Activated CD4-positive, alpha-beta T cell treated with anti-CD3 and anti-CD28 coated beads, Interleukin-2, amount 10 ng/mL, durations not matched to agents 24 days and 14 days (primary cell): ENCODE measurements at regions of chr9 and their contacts with region 1.

Region 1: GRCh38 chr9:111916234-111916645 is 19.6 kb downstream of the UGCG start:
- DNase-seq: peak; percentile 74
- H3K4me3 Mint-ChIP-seq: peak overlapping the region; percentile 3
- H3K27ac Mint-ChIP-seq: peak overlapping the region; percentile 89
- H3K4me1 Mint-ChIP-seq: peaks cover 38% of the 10 kb centered on the region
- H3K27me3 Mint-ChIP-seq: no peaks in the 10 kb centered on the region

Region 2: GRCh38 chr9:111937781-111938426 is 21.7 kb after region 1 on chr9:
- intact Hi-C with region 1: loop called (anchors 1 kb)
- DNase-seq: peak; percentile 84
- H3K4me3 Mint-ChIP-seq: peak overlapping the region; percentile 45
- H3K27ac Mint-ChIP-seq: peak overlapping the region; percentile 83
- H3K4me1 Mint-ChIP-seq: peaks cover 22% of the 10 kb centered on the region
- H3K27me3 Mint-ChIP-seq: peaks cover 2% of the 10 kb centered on the region

Region 3: DNA sequence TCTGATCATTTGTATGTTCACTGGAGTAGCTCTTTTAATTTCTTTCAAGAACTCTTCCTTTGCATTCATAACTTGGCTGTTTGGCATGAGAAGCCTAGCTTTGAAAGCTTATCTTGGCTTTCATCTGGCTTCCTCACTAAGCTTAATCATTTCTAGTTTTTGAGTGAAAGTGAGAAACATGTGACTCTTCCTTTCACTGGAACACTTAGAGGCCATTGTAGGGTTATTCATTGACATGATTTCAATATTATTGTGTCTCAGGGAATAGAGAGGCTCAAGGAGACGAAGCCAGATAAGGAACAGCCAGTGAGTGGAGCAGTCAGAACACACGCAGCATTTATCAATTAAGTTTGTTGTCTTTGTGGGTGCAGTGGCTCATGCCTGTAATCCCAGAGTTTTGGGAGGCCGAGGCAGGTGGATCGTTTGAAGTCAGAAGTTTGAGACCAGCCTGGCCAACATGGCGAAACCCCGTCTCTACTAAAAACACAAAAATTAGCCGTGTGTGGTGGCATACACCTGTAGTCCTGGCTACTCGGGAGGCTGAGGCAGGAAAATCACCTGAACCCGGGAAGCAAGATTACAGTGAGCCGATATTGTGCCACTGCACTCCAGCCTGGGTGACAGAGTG is 78.7 kb after region 1 on chr9:
- intact Hi-C with region 1: loop called (anchors 1 kb)
- DNase-seq: no peak
- H3K4me3 Mint-ChIP-seq: peak overlapping the region; percentile 34
- H3K27ac Mint-ChIP-seq: peak overlapping the region; percentile 76
- H3K4me1 Mint-ChIP-seq: peaks cover 23% of the 10 kb centered on the region
- H3K27me3 Mint-ChIP-seq: peaks cover 17% of the 10 kb centered on the region

Region 4: DNA sequence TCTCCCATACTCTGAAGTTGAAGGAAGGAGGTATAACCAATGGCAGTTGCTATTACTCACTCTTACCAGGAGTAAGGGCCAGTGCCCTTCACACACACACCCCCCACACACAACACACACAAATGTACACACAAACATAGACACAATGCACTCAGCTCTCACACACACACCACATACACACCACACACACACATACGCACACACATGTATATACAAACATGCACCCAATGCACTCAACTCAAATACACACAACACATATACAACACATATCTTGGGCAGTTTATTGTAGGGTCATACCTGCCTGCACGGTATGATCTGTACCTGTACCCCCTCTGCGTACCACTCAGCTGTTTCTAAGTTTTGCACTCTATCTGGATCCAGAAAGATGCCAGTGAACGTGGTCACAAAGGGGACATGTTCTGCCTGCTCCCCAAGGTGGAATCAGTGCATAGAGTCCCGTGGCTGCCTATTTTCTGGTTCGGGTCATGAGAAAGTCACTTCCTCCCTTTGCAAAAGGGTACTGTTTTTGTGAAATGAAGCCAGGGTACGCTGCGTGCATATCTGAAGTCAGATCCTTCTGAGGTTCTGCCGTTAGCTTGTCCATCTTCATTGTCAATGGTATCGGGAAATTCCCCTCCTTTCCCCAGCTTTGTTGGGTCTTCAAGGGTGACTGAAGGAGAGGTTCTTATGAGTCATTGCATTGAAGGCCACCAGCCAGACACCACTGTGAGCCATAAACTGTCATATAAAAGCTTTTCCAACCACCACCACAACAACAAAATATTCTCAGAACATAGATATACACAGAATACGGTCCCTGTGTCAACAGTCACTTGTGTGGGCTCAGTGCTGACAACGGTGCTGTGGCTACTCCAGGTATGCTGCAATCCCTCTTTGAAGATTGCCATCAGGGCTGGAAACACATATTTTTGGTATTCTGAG is 112.3 kb after region 1 on chr9:
- intact Hi-C with region 1: loop called (anchors 1 kb)
- DNase-seq: peak; percentile 68
- H3K4me3 Mint-ChIP-seq: no peak overlapping the region
- H3K27ac Mint-ChIP-seq: peak overlapping the region; percentile 36
- H3K4me1 Mint-ChIP-seq: peaks cover 38% of the 10 kb centered on the region
- H3K27me3 Mint-ChIP-seq: peaks cover 15% of the 10 kb centered on the region

Region 5: GRCh38 chr9:112061152-112061740 is 145.0 kb after region 1 on chr9:
- intact Hi-C with region 1: loop called (anchors 5 kb)
- DNase-seq: peak; percentile 82
- H3K4me3 Mint-ChIP-seq: no peak overlapping the region
- H3K27ac Mint-ChIP-seq: peak overlapping the region; percentile 48
- H3K4me1 Mint-ChIP-seq: peaks cover 22% of the 10 kb centered on the region
- H3K27me3 Mint-ChIP-seq: no peaks in the 10 kb centered on the region